Activated CD4-positive, alpha-beta memory T cell treated with anti-CD3 and anti-CD28 coated beads, Interleukin-2, amount 10 ng/mL, durations not matched to agents 7 days and 5 days (primary cell): ENCODE measurements at regions of chr21 and their contacts with region 1.

Region 1: GRCh38 chr21:14454016-14455009 is 71.4 kb upstream of the HSPA13 start:
- DNase-seq: no peak
- H3K4me3 Mint-ChIP-seq: peak overlapping the region; percentile 21
- H3K27ac Mint-ChIP-seq: peak overlapping the region; percentile 81
- H3K4me1 Mint-ChIP-seq: peaks cover 47% of the 10 kb centered on the region
- H3K27me3 Mint-ChIP-seq: no peaks in the 10 kb centered on the region

Region 2: DNA sequence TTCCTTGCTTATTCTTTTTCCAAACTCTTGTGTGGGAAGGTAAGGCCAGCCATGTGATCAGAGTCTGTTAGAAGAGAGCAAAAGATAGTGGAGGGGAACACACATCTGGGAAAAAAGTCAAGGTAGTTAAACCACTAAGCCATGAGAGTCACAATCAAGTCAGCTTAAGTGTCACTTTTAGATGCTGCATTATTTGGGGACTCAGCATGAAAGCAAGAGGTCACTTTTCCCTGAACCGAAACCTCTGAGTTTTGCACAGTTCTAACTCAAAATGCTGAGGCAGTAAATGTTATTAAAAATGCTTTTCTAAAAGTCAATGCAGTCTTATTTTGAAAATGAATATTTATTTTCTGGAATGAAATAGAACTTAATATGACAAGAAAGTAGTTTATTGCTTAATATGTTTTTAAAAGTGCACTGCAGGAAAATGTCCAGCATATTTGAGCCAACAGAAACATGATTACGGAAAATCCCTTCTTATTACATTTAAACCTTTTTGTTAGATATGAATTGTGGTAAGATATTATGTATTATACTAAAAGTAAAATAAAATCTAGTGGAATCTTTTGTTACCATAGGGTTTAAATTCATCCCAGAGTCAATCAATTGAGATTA is 169.1 kb before region 1 on chr21:
- CTCF ChIA-PET with region 1: no interaction called
- POLR2A ChIA-PET with region 1: no interaction called
- DNase-seq: no peak
- H3K4me3 Mint-ChIP-seq: no peak overlapping the region
- H3K27ac Mint-ChIP-seq: no peak overlapping the region
- H3K4me1 Mint-ChIP-seq: no peaks in the 10 kb centered on the region
- H3K27me3 Mint-ChIP-seq: peaks cover 12% of the 10 kb centered on the region

Region 3: DNA sequence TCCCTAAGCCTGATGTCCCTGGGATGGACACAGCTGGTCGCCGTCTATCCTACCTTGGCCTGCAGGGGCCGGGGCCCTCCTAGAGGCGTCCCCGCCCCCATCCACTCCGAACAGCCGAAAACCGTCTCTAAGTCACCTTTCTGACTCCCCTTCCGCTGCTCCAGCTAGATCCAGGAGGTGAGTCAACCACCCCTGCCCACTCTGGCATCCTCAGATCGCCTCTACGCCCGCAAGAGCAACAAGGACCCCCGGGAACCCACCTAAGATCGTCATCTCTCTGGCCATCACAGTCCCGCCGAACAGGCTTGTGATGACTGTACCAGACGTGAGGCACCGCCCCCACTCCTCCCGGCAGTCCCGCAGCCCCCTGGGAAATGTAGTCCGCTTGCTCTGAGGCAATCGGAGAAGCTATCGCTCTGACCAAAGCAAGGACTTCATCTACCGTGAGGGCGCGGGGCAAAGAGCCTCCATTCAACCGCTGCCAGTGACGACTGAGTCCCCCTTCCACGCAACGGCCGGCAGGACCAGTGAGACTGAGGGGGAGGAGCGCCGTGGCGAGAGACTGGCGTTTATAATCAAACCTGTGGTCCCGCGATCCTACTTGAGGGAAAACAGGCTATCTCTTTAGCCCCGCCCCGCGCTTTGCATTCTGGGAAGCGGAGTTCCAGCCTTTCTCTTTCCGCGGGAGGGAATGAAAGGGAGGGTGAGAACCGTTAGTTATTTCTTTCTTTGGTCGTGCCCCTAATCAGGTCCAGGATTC is 71.3 kb before region 1 on chr21 and contains the start of gene HSPA13:
- CTCF ChIA-PET with region 1: no interaction called
- POLR2A ChIA-PET with region 1: interaction called, 10 read pairs
- DNase-seq: peak; percentile 99
- H3K4me3 Mint-ChIP-seq: peak within 1 kb of the TSS; percentile 98
- H3K27ac Mint-ChIP-seq: peak within 1 kb of the TSS; percentile 91
- H3K4me1 Mint-ChIP-seq: peaks cover 48% of the 10 kb centered on the region
- H3K27me3 Mint-ChIP-seq: no peaks in the 10 kb centered on the region
- total RNA-seq, gene HSPA13: 45.5 to 48.5 TPM

Region 4: DNA sequence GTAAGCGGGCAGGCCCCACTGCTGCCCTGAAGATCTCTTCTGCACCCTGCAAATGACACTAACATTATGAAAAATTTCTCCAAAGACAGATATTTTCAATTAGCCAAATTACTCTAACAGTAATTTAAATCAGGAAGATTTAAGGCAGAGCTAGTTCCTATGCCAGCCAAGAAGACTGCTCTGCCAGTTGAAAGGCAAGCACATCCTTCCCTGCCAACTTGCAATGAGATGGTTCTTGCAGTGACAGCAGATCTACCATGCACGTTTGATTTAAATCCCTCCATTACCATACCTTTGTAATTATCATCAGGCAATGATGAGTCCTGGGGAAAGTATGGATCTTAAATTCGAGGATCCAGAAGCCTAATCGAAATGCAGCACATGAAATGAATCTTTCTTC is 15.3 kb after region 1 on chr21:
- CTCF ChIA-PET with region 1: no interaction called
- POLR2A ChIA-PET with region 1: no interaction called
- DNase-seq: no peak
- H3K4me3 Mint-ChIP-seq: no peak overlapping the region
- H3K27ac Mint-ChIP-seq: no peak overlapping the region
- H3K4me1 Mint-ChIP-seq: no peaks in the 10 kb centered on the region
- H3K27me3 Mint-ChIP-seq: no peaks in the 10 kb centered on the region

Region 5: GRCh38 chr21:14482165-14482564 is 27.9 kb after region 1 on chr21:
- CTCF ChIA-PET with region 1: interaction called, 6 read pairs
- POLR2A ChIA-PET with region 1: interaction called, 39 read pairs
- DNase-seq: peak; percentile 42
- H3K4me3 Mint-ChIP-seq: peak overlapping the region; percentile 19
- H3K27ac Mint-ChIP-seq: peak overlapping the region; percentile 87
- H3K4me1 Mint-ChIP-seq: peaks cover 48% of the 10 kb centered on the region
- H3K27me3 Mint-ChIP-seq: no peaks in the 10 kb centered on the region

Region 6: GRCh38 chr21:14523234-14523633 is 68.9 kb after region 1 on chr21:
- CTCF ChIA-PET with region 1: interaction called, 3 read pairs
- POLR2A ChIA-PET with region 1: interaction called, 13 read pairs
- DNase-seq: peak; percentile 59
- H3K4me3 Mint-ChIP-seq: peak overlapping the region; percentile 60
- H3K27ac Mint-ChIP-seq: peak overlapping the region; percentile 75
- H3K4me1 Mint-ChIP-seq: peaks cover 66% of the 10 kb centered on the region
- H3K27me3 Mint-ChIP-seq: no peaks in the 10 kb centered on the region

Region 7: GRCh38 chr21:14545906-14546480 is 91.7 kb after region 1 on chr21 and contains the start of gene SAMSN1:
- CTCF ChIA-PET with region 1: no interaction called
- POLR2A ChIA-PET with region 1: interaction called, 46 read pairs
- DNase-seq: peak; percentile 83
- H3K4me3 Mint-ChIP-seq: peak within 1 kb of the TSS; percentile 98
- H3K27ac Mint-ChIP-seq: peak within 1 kb of the TSS; percentile 87
- H3K4me1 Mint-ChIP-seq: peaks cover 62% of the 10 kb centered on the region
- H3K27me3 Mint-ChIP-seq: no peaks in the 10 kb centered on the region
- total RNA-seq, gene SAMSN1: 87.1 to 91.0 TPM

Region 8: DNA sequence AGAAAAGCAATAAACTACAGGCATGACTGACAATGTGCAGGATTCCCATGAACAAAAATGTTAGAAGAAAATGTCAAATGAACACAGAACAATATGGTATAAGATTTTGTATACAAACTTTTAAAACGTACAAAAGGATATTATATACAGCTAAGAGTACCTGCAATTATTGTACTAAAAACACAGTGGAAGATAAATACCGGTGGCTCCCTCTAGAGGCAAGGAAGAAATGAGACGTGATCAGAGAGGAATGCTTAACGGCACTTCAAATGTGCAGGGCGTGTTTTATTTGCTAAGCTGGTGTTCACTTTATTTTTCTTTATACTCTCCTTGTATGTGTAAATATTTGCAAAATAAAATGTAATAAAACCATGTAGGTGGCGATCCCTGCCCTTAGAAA is 283.6 kb after region 1 on chr21:
- CTCF ChIA-PET with region 1: interaction called, 23 read pairs
- POLR2A ChIA-PET with region 1: interaction called, 8 read pairs
- DNase-seq: peak; percentile 36
- H3K4me3 Mint-ChIP-seq: no peak overlapping the region
- H3K27ac Mint-ChIP-seq: no peak overlapping the region
- H3K4me1 Mint-ChIP-seq: peaks cover 36% of the 10 kb centered on the region
- H3K27me3 Mint-ChIP-seq: no peaks in the 10 kb centered on the region

Region 9: GRCh38 chr21:14850394-14850793 is 396.1 kb after region 1 on chr21:
- CTCF ChIA-PET with region 1: no interaction called
- POLR2A ChIA-PET with region 1: no interaction called
- DNase-seq: no peak
- H3K4me3 Mint-ChIP-seq: no peak overlapping the region
- H3K27ac Mint-ChIP-seq: no peak overlapping the region
- H3K4me1 Mint-ChIP-seq: no peaks in the 10 kb centered on the region
- H3K27me3 Mint-ChIP-seq: peaks cover 2% of the 10 kb centered on the region